ENCODE measurements at regions of chr19 and their contacts with region 1.

Region 1: DNA sequence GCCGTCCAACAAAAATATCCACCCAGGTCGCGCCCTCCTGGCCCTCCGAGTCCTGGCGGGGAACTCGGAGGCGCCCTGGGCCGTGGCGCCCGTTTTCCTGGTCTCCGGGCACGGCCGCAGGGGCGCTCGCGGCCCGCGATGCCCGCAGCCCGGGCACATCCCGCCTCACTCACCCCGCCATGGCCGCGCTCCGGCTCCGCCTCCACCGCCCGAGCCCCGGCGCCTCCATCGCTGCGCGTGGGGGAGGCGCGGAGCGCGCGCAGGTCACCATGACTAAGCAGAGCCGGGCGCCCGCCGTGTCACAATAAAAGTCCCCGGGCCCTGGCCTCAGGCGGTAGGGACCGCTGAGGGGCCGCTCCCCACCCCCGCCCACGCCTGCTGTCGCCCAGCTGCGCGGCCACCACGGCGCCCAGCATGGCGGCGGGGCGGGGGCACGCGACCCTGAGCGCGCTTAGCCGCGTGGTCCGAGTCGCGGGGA is 593 bp downstream of the KEAP1 start:
- DNase-seq: peak; percentile 96

Region 2: DNA sequence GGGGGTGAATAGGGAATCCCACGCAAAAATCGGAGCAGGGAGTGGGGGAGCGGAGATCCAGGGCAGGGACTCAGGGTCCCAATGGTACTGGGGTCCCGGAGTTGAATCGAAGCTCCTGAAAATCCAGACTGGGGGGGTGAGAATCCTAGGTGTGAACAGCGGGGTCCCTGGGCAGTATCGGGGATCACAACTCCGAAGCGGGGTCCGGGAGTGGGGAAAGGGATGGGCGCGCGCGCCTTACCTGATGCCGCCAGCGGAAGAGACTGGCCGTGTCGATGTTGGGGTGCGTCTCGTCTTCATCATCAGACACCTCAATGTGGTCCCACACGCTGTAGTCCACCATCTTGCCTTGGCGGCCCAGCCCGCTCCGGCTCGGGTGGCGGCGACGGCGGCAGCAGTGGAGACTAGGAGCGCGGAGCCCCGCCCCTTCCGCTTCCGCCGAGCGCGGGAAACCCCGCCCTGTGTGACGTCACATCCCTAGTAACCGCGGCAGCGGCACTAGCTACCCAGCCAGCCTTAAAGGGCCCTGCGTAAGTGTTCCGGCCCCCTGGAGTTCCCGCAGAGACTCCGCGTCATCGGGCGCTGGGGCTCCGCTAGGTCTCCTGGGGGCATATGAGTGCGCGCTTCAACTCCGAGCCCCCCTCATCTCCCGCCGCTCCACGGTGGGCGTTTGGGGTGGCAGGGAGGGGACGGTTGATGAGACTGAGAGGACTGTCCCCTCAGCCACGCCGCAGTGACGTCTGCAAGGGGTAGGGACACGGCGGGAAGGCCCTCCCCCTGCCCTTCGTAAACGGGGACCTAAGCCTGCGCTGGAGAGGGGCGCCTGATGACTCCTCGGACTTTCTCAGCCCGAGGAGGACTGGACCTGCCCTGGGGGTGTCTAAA is 99.2 kb before region 1 on chr19 and contains the start of gene CDC37:
- intact Hi-C with region 1: loop called (anchors 5 kb)
- DNase-seq: peak; percentile 99
- total RNA-seq, gene CDC37: 140 TPM

Region 3: DNA sequence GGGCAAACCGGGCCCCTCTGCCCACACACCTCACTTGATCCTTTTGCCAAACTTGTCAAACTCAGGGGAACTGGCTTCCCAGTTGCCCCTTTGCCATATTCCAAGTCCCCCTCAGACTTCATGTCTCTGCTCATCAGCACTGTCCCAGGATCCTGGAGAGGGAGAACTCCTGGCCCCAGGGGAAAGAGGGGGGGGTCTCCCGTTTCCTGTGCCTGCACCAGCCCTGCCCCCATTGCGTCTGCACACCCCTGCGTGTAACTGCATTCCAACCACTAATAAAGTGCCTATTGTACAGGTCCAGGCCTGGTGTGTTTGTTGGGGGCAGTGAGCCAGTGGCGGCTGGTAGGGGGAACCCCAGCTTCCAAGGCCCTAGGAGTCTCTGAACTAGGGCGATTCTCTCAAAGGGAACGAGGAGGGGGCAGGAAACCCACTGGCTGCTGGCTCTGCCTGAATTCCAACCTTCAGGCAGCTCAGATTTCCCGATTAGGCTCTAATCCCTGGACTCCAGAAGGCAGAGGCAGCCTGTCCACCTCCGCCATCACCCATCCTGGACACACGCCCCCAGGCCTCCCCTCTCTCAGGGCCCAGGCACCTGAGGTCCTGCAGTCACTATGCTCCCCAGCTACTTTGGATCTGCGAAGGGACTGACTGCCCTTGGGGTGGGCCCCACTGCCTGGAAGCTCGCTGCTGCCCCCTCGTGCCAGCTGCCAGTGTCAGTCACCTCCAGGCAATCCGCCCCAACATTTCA is 141.9 kb after region 1 on chr19:
- intact Hi-C with region 1: loop called (anchors 10 kb)
- DNase-seq: peak; percentile 91